ENCODE measurements at regions of chr12 and their contacts with region 1.

Region 1: DNA sequence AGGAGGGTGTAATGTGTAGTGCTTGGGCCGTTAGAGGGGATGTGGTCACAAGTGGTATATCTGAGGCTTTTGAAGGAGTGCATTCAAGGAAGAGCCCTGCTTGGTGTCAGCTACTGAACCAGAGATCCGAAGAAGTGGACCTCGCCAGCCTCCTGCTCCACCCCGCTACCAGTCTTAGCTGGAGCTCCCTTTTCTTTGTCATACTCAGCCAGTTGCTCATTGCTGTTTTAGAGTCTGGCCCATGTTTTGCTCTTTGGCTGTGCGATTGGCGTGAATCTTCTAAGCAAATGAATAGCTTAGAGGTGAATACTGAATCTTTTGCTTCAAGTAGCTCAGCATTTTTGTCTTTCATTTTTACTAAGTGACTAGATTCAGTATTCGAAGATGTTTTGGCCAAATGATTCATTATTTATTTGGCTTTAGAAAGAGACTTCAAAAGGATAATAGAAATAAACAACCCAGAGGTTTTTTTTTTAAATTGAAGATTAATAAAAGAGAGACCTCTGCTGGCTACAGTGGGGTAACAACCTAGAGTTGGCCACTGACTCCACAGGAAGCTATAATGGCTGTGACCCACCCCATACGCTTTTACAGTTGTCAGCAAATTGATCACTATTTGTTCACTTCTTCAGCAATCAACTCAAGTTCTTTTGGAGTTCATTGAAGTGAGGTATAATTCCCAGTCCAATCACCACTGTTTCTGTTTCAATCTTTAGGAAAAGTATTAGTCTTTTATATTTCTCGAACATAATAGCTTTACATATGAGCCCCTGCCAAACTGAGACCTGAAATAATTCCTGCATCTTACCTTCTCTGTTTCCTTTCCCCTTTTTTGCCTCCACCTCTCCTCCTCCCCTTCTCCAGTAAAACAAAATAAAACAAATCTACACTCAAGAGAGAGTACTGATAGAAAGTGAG is 19.9 kb downstream of the CDKN1B start:
- DNase-seq: peak in 31 of 35 experiments; percentile 16 to 77 (median 44)
- ATAC-seq: peak; percentile 82 to 88 (median 84)
- H3K4me3 ChIP-seq: peak overlapping the region in 1 of 2 donors; percentile 46
- H3K4me3 Mint-ChIP-seq: peak overlapping the region; percentile 59 to 76 (median 68)
- H3K27ac ChIP-seq: peak overlapping the region; percentile 87
- H3K27ac Mint-ChIP-seq: peak overlapping the region; percentile 89 to 95
- H3K4me1 ChIP-seq: peaks cover 5 to 34% of the 10 kb centered on the region in 2 experiments
- H3K4me1 Mint-ChIP-seq: peaks cover 35 to 56% (median 39%) of the 10 kb centered on the region in 3 donors
- H3K27me3 ChIP-seq: no peaks in the 10 kb centered on the region
- H3K27me3 Mint-ChIP-seq: no peaks in the 10 kb centered on the region

Region 2: DNA sequence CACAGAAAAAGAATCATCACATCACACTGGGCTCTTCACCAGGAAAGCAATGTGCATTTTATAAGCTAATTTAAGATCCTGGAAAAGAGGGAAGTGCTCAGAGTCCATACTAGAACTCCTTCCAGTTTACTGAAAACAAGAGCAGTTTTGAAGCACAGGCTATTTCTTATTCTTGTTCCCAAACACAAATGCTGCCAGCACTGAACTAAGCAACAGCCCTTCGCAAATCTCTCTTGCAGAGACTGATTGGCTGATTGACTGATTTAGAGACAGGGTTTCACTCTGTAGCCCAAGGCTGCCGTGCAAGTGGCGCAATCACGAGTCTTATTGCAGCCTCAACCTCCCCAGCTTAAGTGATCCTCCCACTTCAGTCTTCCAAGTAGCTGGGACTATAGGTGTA is 621.5 kb before region 1 on chr12:
- CTCF ChIA-PET with region 1: no interaction called
- POLR2A ChIA-PET with region 1: no interaction called
- DNase-seq: no peak
- ATAC-seq: no peak
- H3K4me3 ChIP-seq: no peak overlapping the region
- H3K4me3 Mint-ChIP-seq: no peak overlapping the region
- H3K27ac ChIP-seq: no peak overlapping the region
- H3K27ac Mint-ChIP-seq: no peak overlapping the region
- H3K4me1 ChIP-seq: no peaks in the 10 kb centered on the region
- H3K4me1 Mint-ChIP-seq: no peaks in the 10 kb centered on the region
- H3K27me3 ChIP-seq: no peaks in the 10 kb centered on the region
- H3K27me3 Mint-ChIP-seq: no peaks in the 10 kb centered on the region

Region 3: GRCh38 chr12:12356886-12357718 is 379.9 kb before region 1 on chr12 and contains the start of gene BORCS5:
- CTCF ChIA-PET with region 1: interaction called, 7 to 29 read pairs
- POLR2A ChIA-PET with region 1: interaction called in 1 of 2 experiments, 6 read pairs
- DNase-seq: peak; percentile 97 to 99 (median 98)
- ATAC-seq: peak; percentile 90 to 96 (median 91)
- H3K4me3 ChIP-seq: peak within 1 kb of the TSS; percentile 59 to 73
- H3K4me3 Mint-ChIP-seq: peak within 1 kb of the TSS; percentile 87 to 96 (median 93)
- H3K27ac ChIP-seq: peak within 1 kb of the TSS; percentile 90
- H3K27ac Mint-ChIP-seq: peak within 1 kb of the TSS; percentile 94 to 96
- H3K4me1 ChIP-seq: peaks cover 13 to 36% of the 10 kb centered on the region in 2 experiments
- H3K4me1 Mint-ChIP-seq: peaks cover 50 to 58% (median 54%) of the 10 kb centered on the region in 3 donors
- H3K27me3 ChIP-seq: no peaks in the 10 kb centered on the region
- H3K27me3 Mint-ChIP-seq: no peaks in the 10 kb centered on the region
- total RNA-seq, gene BORCS5: 18.0 to 34.0 (median 25.5) TPM

Region 4: GRCh38 chr12:12482959-12483358 is 254.1 kb before region 1 on chr12:
- CTCF ChIA-PET with region 1: interaction called in 1 of 2 experiments, 12 read pairs
- POLR2A ChIA-PET with region 1: no interaction called
- DNase-seq: no peak
- ATAC-seq: no peak
- H3K4me3 ChIP-seq: peak overlapping the region in 1 of 2 donors; percentile 45
- H3K4me3 Mint-ChIP-seq: peak overlapping the region; percentile 58 to 84 (median 81)
- H3K27ac ChIP-seq: peak overlapping the region; percentile 97
- H3K27ac Mint-ChIP-seq: peak overlapping the region; percentile 98 to 99
- H3K4me1 ChIP-seq: peaks cover 19 to 23% of the 10 kb centered on the region in 2 experiments
- H3K4me1 Mint-ChIP-seq: peaks cover 37 to 80% (median 79%) of the 10 kb centered on the region in 3 donors
- H3K27me3 ChIP-seq: no peaks in the 10 kb centered on the region
- H3K27me3 Mint-ChIP-seq: no peaks in the 10 kb centered on the region

Region 5: GRCh38 chr12:12645485-12645884 is 91.5 kb before region 1 on chr12:
- CTCF ChIA-PET with region 1: interaction called, 32 to 60 read pairs
- POLR2A ChIA-PET with region 1: no interaction called
- DNase-seq: peak in 32 of 35 experiments; percentile 11 to 77 (median 32)
- ATAC-seq: peak; percentile 75 to 90 (median 86)
- H3K4me3 ChIP-seq: no peak overlapping the region
- H3K4me3 Mint-ChIP-seq: no peak overlapping the region
- H3K27ac ChIP-seq: no peak overlapping the region
- H3K27ac Mint-ChIP-seq: no peak overlapping the region
- H3K4me1 ChIP-seq: peaks cover 0 to 5% of the 10 kb centered on the region in 2 experiments
- H3K4me1 Mint-ChIP-seq: peaks cover 5 to 8% (median 8%) of the 10 kb centered on the region in 3 donors
- H3K27me3 ChIP-seq: no peaks in the 10 kb centered on the region
- H3K27me3 Mint-ChIP-seq: no peaks in the 10 kb centered on the region

Region 6: DNA sequence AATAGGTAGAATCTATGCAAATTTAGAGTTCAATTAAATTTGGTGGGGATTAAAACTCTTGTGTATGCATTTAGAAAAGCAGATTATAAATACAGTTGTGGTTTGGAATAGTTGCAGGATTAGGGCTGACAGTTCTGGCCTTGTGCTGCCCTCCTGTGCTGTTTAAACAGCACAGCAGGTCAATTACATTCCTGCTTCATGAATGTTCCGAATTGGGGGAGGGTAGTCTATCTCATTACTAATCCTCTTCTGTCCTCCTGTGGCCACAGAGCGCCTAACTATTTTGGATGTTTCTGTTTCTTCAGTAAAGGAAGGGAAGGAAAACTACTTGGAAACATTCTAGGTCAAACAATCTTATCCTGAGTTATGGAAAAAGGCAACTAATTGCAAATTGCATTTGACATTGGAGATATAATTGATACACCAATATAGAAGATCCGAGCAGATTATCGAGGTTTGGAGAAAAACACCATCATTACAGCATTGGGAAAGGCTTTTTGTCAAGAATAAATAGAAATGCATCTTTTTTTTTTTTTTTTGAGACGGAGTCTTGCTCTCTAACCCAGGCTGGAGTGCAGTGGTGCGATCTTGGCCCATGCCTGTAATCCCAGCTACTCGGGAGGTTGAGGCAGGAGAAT is 32.3 kb before region 1 on chr12:
- CTCF ChIA-PET with region 1: interaction called, 8 to 12 read pairs
- POLR2A ChIA-PET with region 1: interaction called, 3 read pairs
- DNase-seq: peak in 16 of 35 experiments; percentile 11 to 75 (median 30)
- ATAC-seq: peak; percentile 57 to 79 (median 65)
- H3K4me3 ChIP-seq: no peak overlapping the region
- H3K4me3 Mint-ChIP-seq: peak overlapping the region in 1 of 3 donors; percentile 69
- H3K27ac ChIP-seq: no peak overlapping the region
- H3K27ac Mint-ChIP-seq: peak overlapping the region; percentile 62 to 71
- H3K4me1 ChIP-seq: peaks cover 23 to 26% of the 10 kb centered on the region in 2 experiments
- H3K4me1 Mint-ChIP-seq: peaks cover 12 to 35% (median 24%) of the 10 kb centered on the region in 3 donors
- H3K27me3 ChIP-seq: no peaks in the 10 kb centered on the region
- H3K27me3 Mint-ChIP-seq: no peaks in the 10 kb centered on the region

Region 7: DNA sequence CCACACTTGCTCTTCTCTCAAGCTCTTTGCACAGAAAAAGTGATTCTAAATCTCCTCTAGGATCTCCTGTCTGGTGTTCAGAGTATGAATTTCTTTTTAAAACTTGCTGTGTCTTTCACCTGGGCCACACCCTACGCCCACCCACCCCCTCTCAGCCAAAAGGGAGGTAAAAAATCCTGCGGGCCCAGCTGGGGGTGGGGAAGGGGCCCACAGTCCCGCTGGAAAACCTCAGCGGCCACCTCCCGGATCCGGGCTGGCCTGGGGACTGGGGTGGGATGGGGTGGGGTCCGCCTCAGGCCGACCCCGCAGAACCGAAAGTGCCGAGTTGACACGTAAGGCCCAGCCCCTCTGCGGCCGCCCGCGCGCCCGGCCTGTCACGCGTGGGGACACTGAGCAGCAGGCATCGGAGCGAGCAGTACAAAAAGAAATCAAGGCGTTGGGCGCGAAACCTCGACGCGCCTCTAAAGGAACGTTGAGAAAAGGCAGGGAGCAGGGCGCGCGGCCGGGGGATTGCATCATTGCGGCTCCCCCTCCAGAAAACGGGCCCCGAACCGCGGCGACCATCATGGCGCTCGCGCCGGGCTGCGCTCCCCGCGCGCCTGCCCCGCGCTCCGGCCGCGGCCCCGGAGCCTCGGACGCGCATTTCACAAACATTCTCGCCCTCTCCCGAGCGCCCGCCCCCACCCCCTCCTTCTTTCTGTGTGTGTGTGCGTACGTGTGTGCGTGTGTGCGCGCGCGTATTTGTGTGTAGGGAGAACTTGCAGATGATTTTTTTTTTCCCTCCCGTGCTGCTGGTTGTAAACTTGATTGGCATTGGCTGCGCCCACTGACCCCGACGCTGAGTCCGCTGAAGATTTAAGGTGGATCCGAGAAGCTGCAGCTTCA is 12.1 kb before region 1 on chr12:
- CTCF ChIA-PET with region 1: interaction called, 17 to 66 read pairs
- POLR2A ChIA-PET with region 1: interaction called, 5 to 14 read pairs
- DNase-seq: peak in 34 of 35 experiments; percentile 79 to 96 (median 88)
- ATAC-seq: peak; percentile 59 to 69 (median 62)
- H3K4me3 ChIP-seq: peak overlapping the region; percentile 65 to 81
- H3K4me3 Mint-ChIP-seq: peak overlapping the region; percentile 87 to 100 (median 99)
- H3K27ac ChIP-seq: peak overlapping the region; percentile 97
- H3K27ac Mint-ChIP-seq: peak overlapping the region; percentile 98 to 99
- H3K4me1 ChIP-seq: peaks cover 39% of the 10 kb centered on the region in 2 experiments
- H3K4me1 Mint-ChIP-seq: peaks cover 51 to 62% (median 58%) of the 10 kb centered on the region in 3 donors
- H3K27me3 ChIP-seq: no peaks in the 10 kb centered on the region
- H3K27me3 Mint-ChIP-seq: no peaks in the 10 kb centered on the region

Region 8: DNA sequence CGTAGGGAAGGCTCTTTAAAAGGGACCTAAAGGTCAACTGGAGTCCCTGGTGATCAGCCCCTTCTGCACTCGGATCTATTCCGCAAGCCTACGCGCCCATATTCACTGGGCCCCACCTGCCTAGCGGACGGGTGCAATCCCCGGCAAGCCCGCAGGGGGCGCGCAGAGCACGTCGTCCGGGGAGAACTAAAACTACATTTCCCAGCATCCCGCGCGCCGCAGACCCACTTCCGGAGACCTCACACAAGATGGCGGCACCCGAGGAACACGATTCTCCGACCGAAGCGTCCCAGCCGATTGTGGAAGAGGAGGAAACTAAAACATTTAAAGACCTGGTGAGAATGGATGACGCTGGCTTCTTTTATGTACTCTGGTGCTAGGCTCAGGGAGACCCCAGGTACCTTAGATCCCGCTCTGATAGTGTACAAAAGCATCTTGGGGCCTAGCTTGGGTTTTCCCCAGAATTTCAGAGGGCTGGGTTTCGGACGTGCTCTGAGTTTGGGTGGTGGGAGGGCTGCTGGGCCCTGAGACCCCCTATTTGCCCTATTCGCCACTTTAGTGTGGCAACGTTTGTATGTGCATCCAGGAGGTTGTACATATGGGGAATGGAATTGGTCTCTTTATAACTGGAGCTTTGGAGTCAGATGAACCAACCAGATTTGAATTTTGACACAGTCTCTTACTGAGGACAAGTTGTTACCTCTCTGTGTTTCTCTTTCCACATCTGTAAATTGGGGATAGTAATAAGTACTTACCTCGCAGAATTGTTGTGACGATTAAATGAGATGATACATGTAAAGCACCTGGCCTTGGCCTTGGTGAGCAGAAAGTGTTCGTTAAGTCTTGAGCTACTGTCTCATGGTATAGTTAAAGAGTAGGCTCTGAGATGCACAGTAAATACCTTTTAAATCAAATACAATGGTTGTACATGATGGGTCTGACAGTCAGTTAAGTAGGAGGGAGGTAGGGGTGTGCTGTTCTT is 76.4 kb after region 1 on chr12 and contains the start of gene DDX47:
- CTCF ChIA-PET with region 1: interaction called in 1 of 2 experiments, 10 read pairs
- POLR2A ChIA-PET with region 1: no interaction called
- DNase-seq: peak; percentile 88 to 98 (median 96)
- ATAC-seq: peak; percentile 81 to 92 (median 83)
- H3K4me3 ChIP-seq: peak within 1 kb of the TSS; percentile 78 to 97
- H3K4me3 Mint-ChIP-seq: peak within 1 kb of the TSS; percentile 88 to 99 (median 91)
- H3K27ac ChIP-seq: peak within 1 kb of the TSS; percentile 77
- H3K27ac Mint-ChIP-seq: peak within 1 kb of the TSS; percentile 83 to 89
- H3K4me1 ChIP-seq: peaks cover 26 to 32% of the 10 kb centered on the region in 2 experiments
- H3K4me1 Mint-ChIP-seq: peaks cover 61 to 74% (median 73%) of the 10 kb centered on the region in 3 donors
- H3K27me3 ChIP-seq: no peaks in the 10 kb centered on the region
- H3K27me3 Mint-ChIP-seq: no peaks in the 10 kb centered on the region
- total RNA-seq, gene DDX47: 60.4 to 141 (median 69.8) TPM